Activated CD4-positive, alpha-beta memory T cell treated with anti-CD3 and anti-CD28 coated beads, Interleukin-2, amount 10 ng/mL, durations not matched to agents 7 days and 5 days (primary cell): ENCODE measurements at regions of chrX and their contacts with region 1.

Region 1: DNA sequence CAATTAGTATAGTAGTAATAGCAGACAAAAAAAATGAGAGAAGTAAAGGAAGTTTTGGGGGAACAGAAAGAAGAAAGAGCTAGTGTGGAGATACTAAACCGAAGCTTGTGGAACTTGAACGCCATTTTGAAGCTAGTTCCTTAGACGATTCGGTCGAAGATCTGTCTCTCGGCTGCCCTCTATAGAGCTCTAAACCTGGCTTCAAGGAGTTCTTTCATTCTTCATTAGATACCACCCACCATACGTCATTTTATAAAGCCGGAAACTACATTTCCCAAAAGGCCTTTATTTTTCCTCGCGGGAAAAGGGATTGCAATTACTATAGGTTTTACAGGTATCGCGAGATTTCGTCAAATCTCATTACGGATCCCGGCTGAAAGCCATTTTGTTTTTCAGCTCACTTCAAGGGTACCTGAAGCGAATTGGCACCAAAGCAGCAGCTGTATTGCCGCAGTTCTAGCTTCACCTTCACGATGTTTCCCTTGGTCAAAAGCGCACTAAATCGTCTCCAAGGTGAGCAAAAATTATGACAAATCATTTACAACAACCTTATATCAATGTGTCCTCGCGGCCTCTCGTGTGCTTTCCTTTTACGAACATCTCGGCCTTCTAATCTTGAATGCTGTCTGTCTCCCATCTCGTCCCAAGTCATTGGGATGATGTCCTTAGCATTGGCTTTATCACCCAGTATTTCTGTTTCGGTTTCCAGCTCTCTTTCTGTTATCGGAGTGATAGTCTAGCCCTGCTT is at the start of gene COX7B:
- DNase-seq: peak; percentile 70
- H3K4me3 Mint-ChIP-seq: peak within 1 kb of the TSS; percentile 85
- H3K27ac Mint-ChIP-seq: peak within 1 kb of the TSS; percentile 90
- H3K4me1 Mint-ChIP-seq: peaks cover 28% of the 10 kb centered on the region
- H3K27me3 Mint-ChIP-seq: no peaks in the 10 kb centered on the region
- total RNA-seq, gene COX7B: 227 to 250 TPM

Region 2: GRCh38 chrX:77768787-77769186 is 130.5 kb before region 1 on chrX:
- CTCF ChIA-PET with region 1: no interaction called
- POLR2A ChIA-PET with region 1: no interaction called
- DNase-seq: no peak
- H3K4me3 Mint-ChIP-seq: no peak overlapping the region
- H3K27ac Mint-ChIP-seq: peak overlapping the region; percentile 23
- H3K4me1 Mint-ChIP-seq: peaks cover 22% of the 10 kb centered on the region
- H3K27me3 Mint-ChIP-seq: no peaks in the 10 kb centered on the region

Region 3: DNA sequence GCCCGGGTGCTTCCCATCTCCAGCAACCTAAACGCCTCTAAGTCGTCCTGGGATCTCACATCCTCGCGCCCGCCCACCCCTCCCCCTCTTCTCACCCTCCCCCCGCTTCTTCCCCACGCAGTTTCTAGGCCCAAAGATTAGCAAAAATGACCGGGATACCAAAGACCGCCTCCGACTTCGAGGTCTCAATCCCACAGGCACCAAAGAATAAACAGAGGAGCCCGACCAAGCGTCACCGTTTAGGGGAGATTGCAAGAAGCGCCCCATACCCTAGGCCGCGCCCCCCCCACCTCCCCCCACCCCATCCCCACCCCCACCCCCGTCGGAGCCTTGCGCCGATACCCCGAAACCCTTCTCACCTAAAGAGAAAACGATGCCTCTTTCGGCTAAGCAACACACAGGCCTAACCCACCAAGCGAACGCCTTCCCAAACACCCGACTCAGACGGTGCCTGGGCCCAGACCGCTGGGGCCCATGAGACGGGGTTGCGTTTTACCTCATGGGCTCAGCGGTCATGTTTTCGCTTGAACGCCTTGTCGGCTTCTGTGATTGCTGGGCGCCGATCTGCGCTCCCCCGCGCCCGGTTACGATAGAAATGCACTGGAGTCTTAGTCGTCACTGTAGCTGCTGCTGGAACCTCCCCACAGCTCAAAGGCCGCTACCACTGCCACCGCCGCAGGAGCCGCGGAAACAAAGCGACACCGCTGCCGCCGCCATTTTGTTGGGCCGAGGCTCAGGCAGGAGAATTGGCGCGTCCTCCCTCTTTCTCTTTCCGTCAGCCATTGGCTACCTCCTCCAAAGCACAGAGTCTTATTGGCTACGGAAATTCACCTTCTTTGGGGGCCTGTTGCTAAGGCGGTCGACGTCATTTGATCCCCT is 113.5 kb before region 1 on chrX and contains the start of gene ATRX:
- CTCF ChIA-PET with region 1: interaction called, 4 read pairs
- POLR2A ChIA-PET with region 1: interaction called, 11 read pairs
- DNase-seq: peak; percentile 82
- H3K4me3 Mint-ChIP-seq: peak within 1 kb of the TSS; percentile 100
- H3K27ac Mint-ChIP-seq: peak within 1 kb of the TSS; percentile 100
- H3K4me1 Mint-ChIP-seq: peaks cover 26% of the 10 kb centered on the region
- H3K27me3 Mint-ChIP-seq: no peaks in the 10 kb centered on the region
- total RNA-seq, gene ATRX: 67.6 to 70.2 TPM

Region 4: DNA sequence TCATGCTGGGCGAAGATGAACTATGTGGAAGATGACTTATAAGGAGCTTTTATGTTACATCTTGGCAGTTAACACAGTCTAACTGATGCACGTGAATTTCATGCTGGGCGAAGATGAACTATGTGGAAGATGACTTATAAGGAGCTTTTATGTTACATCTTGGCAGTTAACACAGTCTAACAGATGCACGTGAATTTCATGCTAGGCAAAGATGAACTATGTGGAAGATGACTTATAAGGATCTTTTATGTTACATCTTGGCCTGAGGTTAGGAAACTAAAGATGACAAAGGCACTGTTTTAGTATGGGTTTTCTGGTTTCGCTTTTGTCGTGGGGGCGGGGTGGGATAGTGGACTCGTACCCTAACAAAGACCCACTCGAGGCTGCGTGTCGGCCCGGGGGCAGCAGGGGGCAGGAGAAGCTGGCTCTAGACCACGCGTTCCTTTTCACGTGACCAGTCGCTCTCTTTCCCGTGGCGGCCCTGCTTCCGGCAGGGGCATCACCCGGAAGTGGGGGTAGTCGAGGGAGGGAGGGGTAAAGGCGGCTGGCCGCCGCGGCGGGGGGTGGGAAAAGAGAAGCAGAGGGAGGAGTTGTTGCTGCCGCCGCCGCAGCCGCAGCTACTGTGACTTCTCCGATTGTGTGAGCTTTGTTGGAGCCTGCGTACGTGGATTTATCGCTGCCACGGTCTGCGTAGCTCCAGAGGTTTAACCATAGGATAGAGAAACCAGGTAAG is 11.0 kb after region 1 on chrX and contains the start of gene ATP7A:
- CTCF ChIA-PET with region 1: interaction called, 22 read pairs
- POLR2A ChIA-PET with region 1: interaction called, 61 read pairs
- DNase-seq: peak; percentile 92
- H3K4me3 Mint-ChIP-seq: peak within 1 kb of the TSS; percentile 98
- H3K27ac Mint-ChIP-seq: peak within 1 kb of the TSS; percentile 97
- H3K4me1 Mint-ChIP-seq: peaks cover 21% of the 10 kb centered on the region
- H3K27me3 Mint-ChIP-seq: no peaks in the 10 kb centered on the region
- total RNA-seq, gene ATP7A: 12.6 to 13.3 TPM

Region 5: GRCh38 chrX:78024349-78025108 is 125.3 kb after region 1 on chrX:
- CTCF ChIA-PET with region 1: interaction called, 16 read pairs
- POLR2A ChIA-PET with region 1: interaction called, 3 read pairs
- DNase-seq: peak; percentile 16
- H3K4me3 Mint-ChIP-seq: no peak overlapping the region
- H3K27ac Mint-ChIP-seq: no peak overlapping the region
- H3K4me1 Mint-ChIP-seq: no peaks in the 10 kb centered on the region
- H3K27me3 Mint-ChIP-seq: no peaks in the 10 kb centered on the region

Region 6: GRCh38 chrX:78103623-78104446 is 204.6 kb after region 1 on chrX and contains the start of gene PGK1:
- CTCF ChIA-PET with region 1: interaction called, 4 read pairs
- POLR2A ChIA-PET with region 1: interaction called, 27 read pairs
- DNase-seq: peak; percentile 95
- H3K4me3 Mint-ChIP-seq: peak within 1 kb of the TSS; percentile 99
- H3K27ac Mint-ChIP-seq: peak within 1 kb of the TSS; percentile 92
- H3K4me1 Mint-ChIP-seq: peaks cover 51% of the 10 kb centered on the region
- H3K27me3 Mint-ChIP-seq: no peaks in the 10 kb centered on the region
- total RNA-seq, gene PGK1: 1,048 to 1,050 TPM